CD8-positive, alpha-beta T cell (primary cell): ENCODE measurements at regions of chr9 and their contacts with region 1.

Region 1: DNA sequence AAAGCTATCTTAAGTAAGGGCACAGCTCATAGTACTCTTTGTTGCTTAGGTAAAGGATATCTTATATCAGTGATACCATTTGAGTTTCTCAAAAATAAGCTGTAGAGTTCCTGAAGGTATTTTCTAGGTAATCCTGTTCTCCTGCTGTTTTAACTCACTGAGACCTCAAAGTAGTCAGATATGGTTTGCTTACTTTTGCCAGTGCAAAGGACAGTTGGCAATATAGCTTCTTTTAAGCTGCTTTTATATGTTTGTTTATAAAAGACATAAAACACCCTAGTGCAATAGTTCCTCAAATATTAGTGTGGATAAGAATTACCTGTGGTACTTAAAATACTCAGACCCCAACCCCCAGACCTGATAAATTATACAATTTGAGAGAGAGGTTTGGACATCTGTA is 12.1 kb downstream of the NCBP1 start:
- DNase-seq: no peak
- ATAC-seq: no peak
- H3K4me3 ChIP-seq: no peak overlapping the region
- H3K4me3 Mint-ChIP-seq: no peak overlapping the region
- H3K27ac ChIP-seq: no peak overlapping the region
- H3K27ac Mint-ChIP-seq: no peak overlapping the region
- H3K4me1 ChIP-seq: no peaks in the 10 kb centered on the region
- H3K4me1 Mint-ChIP-seq: peaks cover 14% of the 10 kb centered on the region
- H3K27me3 ChIP-seq: no peaks in the 10 kb centered on the region
- H3K27me3 Mint-ChIP-seq: no peaks in the 10 kb centered on the region
- CTCF ChIP-seq: no peak

Region 2: GRCh38 chr9:97689401-97689800 is 43.7 kb after region 1 on chr9:
- CTCF ChIA-PET with region 1: no interaction called
- POLR2A ChIA-PET with region 1: no interaction called
- intact Hi-C with region 1: loop called in 1 of 2 experiments (anchors 5 kb)
- DNase-seq: no peak
- ATAC-seq: no peak
- H3K4me3 ChIP-seq: no peak overlapping the region
- H3K4me3 Mint-ChIP-seq: no peak overlapping the region
- H3K27ac ChIP-seq: no peak overlapping the region
- H3K27ac Mint-ChIP-seq: peak overlapping the region; percentile 37
- H3K4me1 ChIP-seq: peaks cover 3% of the 10 kb centered on the region
- H3K4me1 Mint-ChIP-seq: peaks cover 32% of the 10 kb centered on the region
- H3K27me3 ChIP-seq: no peaks in the 10 kb centered on the region
- H3K27me3 Mint-ChIP-seq: no peaks in the 10 kb centered on the region
- CTCF ChIP-seq: no peak